ENCODE measurements at regions of chr2 and their contacts with region 1.

Region 1: DNA sequence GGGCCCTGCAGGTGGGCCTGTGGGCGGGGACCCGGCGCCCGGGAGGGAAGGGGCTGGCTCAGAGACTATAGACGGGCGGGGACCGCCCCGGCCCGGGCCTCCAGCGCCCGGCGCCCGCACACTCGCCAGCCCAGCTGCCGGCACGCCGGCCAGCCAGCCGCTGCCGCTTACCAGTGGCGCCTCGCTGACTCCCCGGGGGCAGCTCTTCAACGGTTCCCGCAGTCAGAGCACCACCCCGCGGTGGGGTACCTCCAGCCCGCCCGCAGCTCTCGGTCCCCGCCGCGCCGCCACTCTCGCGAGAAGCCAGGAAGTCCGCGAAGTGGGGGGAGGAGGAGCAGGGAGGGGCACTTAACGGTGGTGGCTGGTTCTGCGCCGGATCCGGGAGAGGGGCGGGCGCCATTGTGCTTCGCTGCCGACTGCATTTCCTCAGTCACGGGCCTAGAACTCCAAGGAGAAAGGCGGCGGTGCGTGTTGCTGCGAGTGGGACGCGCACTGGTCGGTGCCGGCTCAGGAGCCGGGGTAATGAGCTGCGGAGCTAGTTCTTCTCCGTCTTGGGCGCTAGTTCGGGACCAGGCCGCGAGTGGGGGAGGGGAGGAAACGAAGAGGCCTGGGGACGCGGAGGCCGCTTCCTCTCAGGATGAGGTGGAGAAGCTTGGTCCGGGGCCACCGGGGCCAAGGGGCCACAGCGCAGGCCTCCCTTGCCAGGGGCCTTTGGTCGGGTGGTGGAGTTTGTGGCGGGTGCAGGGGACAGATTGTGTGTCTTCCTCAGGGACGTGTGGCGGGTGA is at the start of gene MARCHF7:
- DNase-seq: peak; percentile 96 to 97
- ATAC-seq: peak; percentile 91 to 97 (median 92)
- H3K4me3 ChIP-seq: peak within 1 kb of the TSS; percentile 89
- H3K4me3 Mint-ChIP-seq: peak within 1 kb of the TSS; percentile 99
- H3K27ac ChIP-seq: peak within 1 kb of the TSS; percentile 95
- H3K27ac Mint-ChIP-seq: peak within 1 kb of the TSS; percentile 97 to 100
- H3K4me1 ChIP-seq: peaks cover 29% of the 10 kb centered on the region
- H3K4me1 Mint-ChIP-seq: peaks cover 48 to 51% of the 10 kb centered on the region in 2 donors
- H3K27me3 ChIP-seq: no peaks in the 10 kb centered on the region
- H3K27me3 Mint-ChIP-seq: no peaks in the 10 kb centered on the region
- CTCF ChIP-seq: peak; percentile 14
- total RNA-seq, gene MARCHF7: 60.5 to 96.5 (median 66.8) TPM

Region 2: DNA sequence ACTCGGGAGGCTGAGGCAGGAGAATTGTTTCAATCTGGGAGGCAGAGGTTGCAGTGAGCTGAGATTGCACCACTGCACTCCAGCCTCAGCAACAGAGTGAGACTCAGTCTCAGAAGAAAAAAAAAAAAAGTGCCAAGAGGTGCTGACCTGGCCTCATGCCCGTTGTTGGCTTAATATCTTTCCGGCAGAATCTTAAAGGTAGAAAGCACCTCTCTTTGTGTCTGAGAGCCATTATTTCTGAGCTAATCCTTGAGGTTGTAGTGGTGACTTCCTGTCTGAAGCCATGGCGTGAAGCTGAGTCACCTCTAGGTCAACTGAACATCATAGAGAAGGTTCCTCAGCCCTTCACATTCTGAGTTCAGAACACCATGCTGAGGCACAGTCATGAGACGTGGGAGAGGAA is 486.3 kb before region 1 on chr2:
- intact Hi-C with region 1: loop called (anchors 5 kb)
- DNase-seq: peak; percentile 47 to 58
- ATAC-seq: peak; percentile 84 to 87 (median 84)
- H3K4me3 ChIP-seq: no peak overlapping the region
- H3K4me3 Mint-ChIP-seq: peak overlapping the region; percentile 78
- H3K27ac ChIP-seq: peak overlapping the region; percentile 1
- H3K27ac Mint-ChIP-seq: peak overlapping the region; percentile 76 to 81
- H3K4me1 ChIP-seq: peaks cover 62% of the 10 kb centered on the region
- H3K4me1 Mint-ChIP-seq: peaks cover 66% of the 10 kb centered on the region in 2 donors
- H3K27me3 ChIP-seq: no peaks in the 10 kb centered on the region
- H3K27me3 Mint-ChIP-seq: no peaks in the 10 kb centered on the region
- CTCF ChIP-seq: no peak

Region 3: GRCh38 chr2:159243529-159243928 is 468.8 kb before region 1 on chr2:
- intact Hi-C with region 1: no loop called
- DNase-seq: no peak
- ATAC-seq: no peak
- H3K4me3 ChIP-seq: no peak overlapping the region
- H3K4me3 Mint-ChIP-seq: no peak overlapping the region
- H3K27ac ChIP-seq: no peak overlapping the region
- H3K27ac Mint-ChIP-seq: no peak overlapping the region
- H3K4me1 ChIP-seq: no peaks in the 10 kb centered on the region
- H3K4me1 Mint-ChIP-seq: peaks cover 20 to 22% of the 10 kb centered on the region in 2 donors
- H3K27me3 ChIP-seq: no peaks in the 10 kb centered on the region
- H3K27me3 Mint-ChIP-seq: no peaks in the 10 kb centered on the region
- CTCF ChIP-seq: no peak

Region 4: DNA sequence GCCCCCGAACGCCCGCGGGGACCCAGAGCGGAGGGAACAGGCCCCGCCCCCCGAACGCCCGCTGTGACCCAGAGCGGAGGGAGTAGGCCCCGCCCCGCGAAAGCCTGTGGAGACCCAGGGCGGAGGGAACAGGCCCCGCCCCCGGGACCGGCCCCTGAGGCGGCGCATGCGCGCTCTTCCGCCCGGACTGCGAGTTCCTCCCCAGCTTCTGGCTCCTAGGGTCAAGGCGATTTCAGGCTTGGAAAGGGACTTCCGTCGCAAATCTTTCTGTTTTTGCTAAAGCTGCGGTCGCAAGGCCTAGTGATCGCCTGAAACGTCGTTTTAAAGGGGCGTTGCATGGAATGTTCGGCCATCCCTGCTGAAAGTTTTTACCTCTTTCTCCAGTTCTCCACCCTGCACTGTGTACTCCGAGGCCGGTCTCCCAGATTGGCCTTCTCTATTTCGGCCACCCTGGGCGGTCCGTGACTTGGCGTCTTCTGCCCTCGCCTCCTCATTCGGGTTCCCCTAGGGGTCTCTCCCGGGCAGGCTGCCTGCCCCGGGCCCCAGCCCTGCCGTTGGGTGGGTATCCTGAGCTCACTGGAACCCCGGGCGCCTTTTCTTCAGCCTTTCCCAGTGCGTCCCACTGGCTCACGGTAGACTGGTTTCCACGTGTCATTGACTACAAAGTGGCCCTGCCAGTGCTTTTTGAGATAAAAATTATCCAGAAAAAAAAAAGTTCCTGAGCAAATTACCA is 425.5 kb before region 1 on chr2:
- intact Hi-C with region 1: loop called (anchors 2 kb)
- DNase-seq: peak; percentile 92 to 99
- ATAC-seq: peak; percentile 96 to 100 (median 97)
- H3K4me3 ChIP-seq: peak overlapping the region; percentile 64
- H3K4me3 Mint-ChIP-seq: peak overlapping the region; percentile 87
- H3K27ac ChIP-seq: peak overlapping the region; percentile 73
- H3K27ac Mint-ChIP-seq: peak overlapping the region; percentile 73 to 91
- H3K4me1 ChIP-seq: peaks cover 29% of the 10 kb centered on the region
- H3K4me1 Mint-ChIP-seq: peaks cover 32 to 38% of the 10 kb centered on the region in 2 donors
- H3K27me3 ChIP-seq: no peaks in the 10 kb centered on the region
- H3K27me3 Mint-ChIP-seq: no peaks in the 10 kb centered on the region
- CTCF ChIP-seq: no peak

Region 5: GRCh38 chr2:159516241-159516766 is 196.0 kb before region 1 on chr2:
- intact Hi-C with region 1: loop called (anchors 2 kb)
- DNase-seq: peak in 1 of 2 donors; percentile 80
- ATAC-seq: peak; percentile 90 to 94 (median 92)
- H3K4me3 ChIP-seq: peak overlapping the region; percentile 75
- H3K4me3 Mint-ChIP-seq: peak overlapping the region; percentile 93
- H3K27ac ChIP-seq: peak overlapping the region; percentile 83
- H3K27ac Mint-ChIP-seq: peak overlapping the region; percentile 93 to 95
- H3K4me1 ChIP-seq: peaks cover 4% of the 10 kb centered on the region
- H3K4me1 Mint-ChIP-seq: peaks cover 15 to 29% of the 10 kb centered on the region in 2 donors
- H3K27me3 ChIP-seq: no peaks in the 10 kb centered on the region
- H3K27me3 Mint-ChIP-seq: no peaks in the 10 kb centered on the region
- CTCF ChIP-seq: no peak

Region 6: DNA sequence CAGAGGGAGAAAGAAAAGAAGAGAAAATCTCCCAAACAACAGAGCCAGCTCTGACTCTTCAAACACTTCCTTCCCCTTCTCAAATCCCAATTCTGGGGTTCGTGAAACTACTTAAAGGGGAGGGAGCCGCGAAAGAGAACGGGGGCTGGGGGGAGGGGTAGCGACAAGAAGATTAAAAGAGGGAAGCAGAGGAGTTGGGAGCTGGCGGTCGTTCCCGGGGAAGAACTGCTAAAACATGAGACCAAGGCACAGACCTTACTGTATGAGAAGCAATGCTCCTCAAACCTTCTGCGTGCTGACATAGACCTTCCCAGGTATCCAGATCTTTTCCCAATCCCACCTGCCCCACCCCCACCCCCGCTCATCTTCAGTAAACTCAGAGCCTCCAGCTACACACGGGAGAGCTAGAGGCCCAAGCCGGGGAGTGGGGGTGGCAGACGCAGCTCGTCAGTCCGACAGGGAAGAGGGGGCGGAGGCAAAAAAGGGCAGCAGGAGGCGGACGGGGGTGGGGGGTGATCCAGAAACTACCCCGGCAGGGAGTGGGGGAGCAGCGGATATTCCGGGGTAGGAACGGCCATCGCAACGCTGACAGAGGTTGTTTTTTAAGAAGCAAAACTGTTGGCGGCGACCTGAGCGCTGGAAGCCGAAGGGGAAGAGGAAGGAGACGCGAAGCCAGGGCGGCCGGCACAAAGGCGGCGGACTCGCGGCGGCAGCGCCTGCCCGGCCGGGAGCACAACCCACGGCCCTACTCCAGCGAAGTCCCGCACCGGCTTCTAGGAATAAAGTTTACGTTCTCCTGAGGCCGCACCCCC is 97.0 kb before region 1 on chr2:
- intact Hi-C with region 1: loop called (anchors 2 kb)
- DNase-seq: peak; percentile 36 to 59
- ATAC-seq: peak; percentile 76 to 79 (median 77)
- H3K4me3 ChIP-seq: peak overlapping the region; percentile 74
- H3K4me3 Mint-ChIP-seq: peak overlapping the region; percentile 91
- H3K27ac ChIP-seq: peak overlapping the region; percentile 67
- H3K27ac Mint-ChIP-seq: peak overlapping the region in 1 of 2 donors; percentile 87
- H3K4me1 ChIP-seq: peaks cover 9% of the 10 kb centered on the region
- H3K4me1 Mint-ChIP-seq: peaks cover 17% of the 10 kb centered on the region in 2 donors
- H3K27me3 ChIP-seq: peaks cover 15% of the 10 kb centered on the region
- H3K27me3 Mint-ChIP-seq: peaks cover 16% of the 10 kb centered on the region in 2 donors
- CTCF ChIP-seq: no peak

Region 7: DNA sequence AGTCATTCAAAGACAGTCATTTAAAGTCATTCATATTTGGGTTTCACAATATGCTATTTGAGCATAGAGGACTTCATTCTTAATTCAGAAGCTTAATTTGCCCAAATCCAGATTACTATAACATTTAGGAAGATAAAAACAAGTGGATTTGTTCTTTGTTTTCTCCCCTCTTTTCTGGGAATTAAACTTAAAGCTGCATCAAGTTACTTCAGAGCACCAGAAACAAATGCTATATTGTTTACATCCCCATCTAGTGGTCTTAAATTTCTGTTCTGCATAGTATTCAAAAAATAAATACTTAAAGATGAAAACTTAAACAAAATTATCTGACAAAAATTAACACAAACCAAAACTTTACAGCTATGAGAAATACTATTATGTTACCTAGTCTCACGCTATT is 34.7 kb before region 1 on chr2:
- intact Hi-C with region 1: no loop called
- DNase-seq: no peak
- ATAC-seq: no peak
- H3K4me3 ChIP-seq: no peak overlapping the region
- H3K4me3 Mint-ChIP-seq: no peak overlapping the region
- H3K27ac ChIP-seq: no peak overlapping the region
- H3K27ac Mint-ChIP-seq: no peak overlapping the region
- H3K4me1 ChIP-seq: no peaks in the 10 kb centered on the region
- H3K4me1 Mint-ChIP-seq: no peaks in the 10 kb centered on the region
- H3K27me3 ChIP-seq: no peaks in the 10 kb centered on the region
- H3K27me3 Mint-ChIP-seq: no peaks in the 10 kb centered on the region
- CTCF ChIP-seq: no peak

Region 8: GRCh38 chr2:159695795-159696448 is 16.4 kb before region 1 on chr2:
- intact Hi-C with region 1: no loop called
- DNase-seq: no peak
- ATAC-seq: no peak
- H3K4me3 ChIP-seq: no peak overlapping the region
- H3K4me3 Mint-ChIP-seq: no peak overlapping the region
- H3K27ac ChIP-seq: no peak overlapping the region
- H3K27ac Mint-ChIP-seq: no peak overlapping the region
- H3K4me1 ChIP-seq: peaks cover 4% of the 10 kb centered on the region
- H3K4me1 Mint-ChIP-seq: peaks cover 5 to 7% of the 10 kb centered on the region in 2 donors
- H3K27me3 ChIP-seq: no peaks in the 10 kb centered on the region
- H3K27me3 Mint-ChIP-seq: no peaks in the 10 kb centered on the region
- CTCF ChIP-seq: no peak

Region 9: GRCh38 chr2:159807183-159808031 is 95.1 kb after region 1 on chr2:
- intact Hi-C with region 1: no loop called
- DNase-seq: peak in 1 of 2 donors; percentile 50
- ATAC-seq: peak in 1 of 3 donors; percentile 48
- H3K4me3 ChIP-seq: no peak overlapping the region
- H3K4me3 Mint-ChIP-seq: no peak overlapping the region
- H3K27ac ChIP-seq: no peak overlapping the region
- H3K27ac Mint-ChIP-seq: no peak overlapping the region
- H3K4me1 ChIP-seq: no peaks in the 10 kb centered on the region
- H3K4me1 Mint-ChIP-seq: no peaks in the 10 kb centered on the region
- H3K27me3 ChIP-seq: no peaks in the 10 kb centered on the region
- H3K27me3 Mint-ChIP-seq: no peaks in the 10 kb centered on the region
- CTCF ChIP-seq: peak; percentile 65

Measured in natural killer cell (primary cell).